ENCODE measurements at regions of chr22 and their contacts with region 1.

Region 1: DNA sequence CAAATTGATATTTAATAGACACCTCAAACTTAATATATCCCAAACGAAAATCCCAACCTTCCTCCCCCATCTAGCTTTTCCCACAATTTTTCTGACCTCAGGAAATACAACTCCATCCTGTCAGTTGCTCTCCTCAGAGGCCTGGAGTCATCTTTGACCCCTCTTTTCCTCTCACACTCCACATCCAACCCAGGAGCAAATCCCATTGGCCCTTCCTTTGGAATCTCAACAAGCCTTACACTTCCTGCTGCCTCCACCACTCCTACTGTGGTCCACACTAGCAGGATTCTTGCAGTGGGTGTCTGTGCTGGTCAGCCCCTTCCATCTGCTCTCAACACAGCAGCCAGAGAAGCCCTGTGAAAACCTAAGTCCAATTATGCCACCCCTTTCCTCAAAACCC is 39.3 kb upstream of the RFPL3 start:
- DNase-seq: no peak
- H3K4me3 ChIP-seq: no peak overlapping the region
- H3K27ac ChIP-seq: no peak overlapping the region
- H3K4me1 ChIP-seq: no peaks in the 10 kb centered on the region
- H3K27me3 ChIP-seq: peaks cover 0 to 6% of the 10 kb centered on the region in 2 donors
- CTCF ChIP-seq: no peak
- POLR2A ChIP-seq: no peak

Region 2: DNA sequence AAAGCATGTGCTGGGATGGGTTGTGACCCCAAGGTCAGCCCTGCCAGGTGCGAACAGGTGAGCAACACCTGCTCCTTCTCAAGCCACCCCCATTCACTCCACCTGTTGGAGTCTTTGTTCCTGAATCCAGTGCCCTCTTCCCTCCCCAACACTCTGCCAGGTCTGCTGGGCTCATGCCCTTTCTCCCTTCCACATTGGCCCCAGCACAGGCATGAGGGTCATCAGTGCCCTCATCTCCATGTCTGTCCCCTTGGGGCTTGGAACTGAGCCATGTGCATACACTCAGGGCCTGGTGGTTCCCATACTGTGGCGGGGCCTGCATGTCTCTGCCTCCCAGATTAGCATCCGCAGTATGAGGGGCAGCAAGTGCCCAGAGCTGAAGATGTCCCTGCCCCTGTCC is 132.5 kb before region 1 on chr22:
- intact Hi-C with region 1: no loop called
- DNase-seq: no peak
- H3K4me3 ChIP-seq: no peak overlapping the region
- H3K27ac ChIP-seq: no peak overlapping the region
- H3K4me1 ChIP-seq: no peaks in the 10 kb centered on the region
- H3K27me3 ChIP-seq: no peaks in the 10 kb centered on the region
- CTCF ChIP-seq: no peak
- POLR2A ChIP-seq: no peak

Region 3: GRCh38 chr22:32352681-32353080 is 34.3 kb after region 1 on chr22:
- intact Hi-C with region 1: loop called (anchors 1 kb)
- DNase-seq: no peak
- H3K4me3 ChIP-seq: no peak overlapping the region
- H3K27ac ChIP-seq: no peak overlapping the region
- H3K4me1 ChIP-seq: no peaks in the 10 kb centered on the region
- H3K27me3 ChIP-seq: no peaks in the 10 kb centered on the region
- CTCF ChIP-seq: no peak
- POLR2A ChIP-seq: no peak

Region 4: GRCh38 chr22:32375678-32376450 is 57.5 kb after region 1 on chr22:
- intact Hi-C with region 1: no loop called
- DNase-seq: no peak
- H3K4me3 ChIP-seq: no peak overlapping the region
- H3K27ac ChIP-seq: no peak overlapping the region
- H3K4me1 ChIP-seq: no peaks in the 10 kb centered on the region
- H3K27me3 ChIP-seq: no peaks in the 10 kb centered on the region
- CTCF ChIP-seq: no peak
- POLR2A ChIP-seq: no peak

Measured in breast epithelium (tissue), 4 donors.